Common myeloid progenitor, CD34-positive (primary cell): ENCODE measurements at regions of chr5 and their contacts with region 1.

Region 1: GRCh38 chr5:141914199-141914743 is 9.4 kb upstream of the DELE1 start:
- DNase-seq: peak; percentile 55 to 82 (median 74)
- H3K4me3 ChIP-seq: peak overlapping the region in 6 of 7 experiments; percentile 30 to 71 (median 58)
- H3K27ac ChIP-seq: no peak overlapping the region
- H3K4me1 ChIP-seq: peaks cover 5 to 14% (median 12%) of the 10 kb centered on the region in 4 experiments
- H3K27me3 ChIP-seq: peaks cover 0 to 8% (median 4%) of the 10 kb centered on the region in 5 experiments

Region 2: DNA sequence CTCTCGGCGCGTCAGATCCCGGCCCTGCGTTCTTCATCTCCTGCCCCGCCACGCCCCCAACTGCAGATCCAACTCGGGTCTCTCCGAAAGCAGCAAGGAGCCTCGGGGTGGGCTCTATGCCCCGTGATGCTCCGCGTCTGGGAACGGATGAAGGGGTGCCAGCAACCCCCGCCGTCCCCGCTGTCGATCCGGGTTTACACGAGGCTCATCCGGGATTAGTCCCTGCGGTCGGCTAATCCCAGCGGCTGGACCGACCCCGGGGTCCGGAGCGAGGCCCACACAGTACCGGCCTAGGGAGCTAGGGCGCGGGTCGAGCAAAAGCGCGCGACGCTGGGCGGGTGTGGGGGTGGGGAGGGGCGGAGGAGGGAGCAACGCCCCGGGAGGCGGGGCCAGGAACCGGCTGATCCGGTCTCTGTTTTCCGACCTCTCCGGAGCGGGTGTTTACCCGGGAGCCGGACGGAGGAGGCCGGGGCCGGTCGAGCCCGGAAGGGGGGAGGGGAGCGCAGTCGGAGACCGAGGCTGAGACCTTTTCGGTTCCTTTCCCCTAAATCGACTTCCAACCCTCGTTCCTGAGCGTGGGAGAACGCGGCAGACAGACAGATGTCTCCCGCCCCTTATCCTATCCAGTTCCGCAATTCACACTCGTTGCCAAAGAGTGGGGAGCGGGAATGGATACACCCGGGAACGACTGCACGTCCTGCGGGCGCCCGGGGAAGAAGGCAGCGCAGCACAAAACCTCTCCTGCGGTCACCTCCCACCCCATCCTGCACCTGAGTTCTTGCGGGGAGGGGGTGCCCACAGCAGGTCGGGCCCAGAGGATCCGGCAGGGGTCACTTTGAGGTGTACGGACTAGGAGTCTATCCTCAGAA is 64.7 kb before region 1 on chr5:
- CTCF ChIA-PET with region 1: no interaction called
- POLR2A ChIA-PET with region 1: no interaction called
- DNase-seq: peak; percentile 32 to 73 (median 65)
- H3K4me3 ChIP-seq: peak overlapping the region; percentile 56 to 91 (median 81)
- H3K27ac ChIP-seq: peak overlapping the region in 1 of 2 experiments; percentile 75
- H3K4me1 ChIP-seq: peaks cover 0 to 19% (median 15%) of the 10 kb centered on the region in 4 experiments
- H3K27me3 ChIP-seq: peaks cover 0 to 3% (median 0%) of the 10 kb centered on the region in 5 experiments

Region 3: DNA sequence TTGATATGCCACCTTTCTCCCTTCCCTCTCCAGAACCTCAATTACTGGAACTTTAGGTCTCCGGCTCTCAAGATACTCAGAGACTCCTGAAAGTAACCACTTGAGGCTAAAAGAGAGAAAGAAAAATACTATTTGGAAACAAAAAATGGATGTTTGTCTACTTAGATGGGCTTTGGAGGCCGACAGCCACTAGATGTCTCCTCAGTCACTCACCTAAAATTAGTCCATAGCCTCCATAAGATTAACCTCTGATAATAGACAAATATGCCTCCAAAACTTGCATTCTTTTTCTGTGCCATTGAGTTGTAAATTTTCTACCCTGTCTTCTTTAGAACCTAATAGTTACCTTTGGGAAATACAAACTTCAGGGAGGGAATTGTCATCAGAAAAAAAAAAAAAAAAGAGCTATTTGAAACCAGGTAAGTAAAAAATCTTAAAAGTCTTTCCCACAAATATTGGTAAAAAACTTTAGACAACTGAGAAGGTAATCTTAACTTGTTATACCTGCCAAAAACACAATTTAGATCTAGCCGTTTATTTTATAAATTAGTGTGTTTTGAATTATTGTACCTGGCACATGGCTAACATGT is 24.9 kb before region 1 on chr5:
- CTCF ChIA-PET with region 1: interaction called, 12 read pairs
- POLR2A ChIA-PET with region 1: no interaction called
- DNase-seq: peak in 2 of 3 donors; percentile 41 to 43
- H3K4me3 ChIP-seq: no peak overlapping the region
- H3K27ac ChIP-seq: no peak overlapping the region
- H3K4me1 ChIP-seq: no peaks in the 10 kb centered on the region
- H3K27me3 ChIP-seq: peaks cover 7 to 22% (median 11%) of the 10 kb centered on the region in 5 experiments

Region 4: DNA sequence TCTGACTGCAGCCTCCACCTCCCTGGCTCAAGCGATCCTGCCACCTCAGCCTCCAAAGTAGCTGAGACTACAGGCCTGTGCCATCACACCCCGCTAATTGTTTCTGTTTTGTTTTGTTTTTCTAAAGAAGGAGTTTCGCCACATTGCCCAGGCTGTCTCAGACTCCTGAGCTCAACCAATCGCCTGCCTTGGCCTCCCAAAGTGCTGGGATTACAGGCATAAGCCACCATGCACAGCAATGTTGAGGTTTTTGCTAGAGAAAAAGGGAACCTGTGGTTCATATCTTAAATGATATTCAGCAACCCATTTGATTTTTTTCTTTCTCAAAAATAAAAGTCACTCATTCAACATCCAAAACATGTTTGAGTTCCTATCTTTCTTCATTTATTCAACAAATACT is 11.0 kb before region 1 on chr5:
- CTCF ChIA-PET with region 1: interaction called, 14 read pairs
- POLR2A ChIA-PET with region 1: interaction called, 6 read pairs
- DNase-seq: peak in 2 of 3 donors; percentile 73 to 76
- H3K4me3 ChIP-seq: no peak overlapping the region
- H3K27ac ChIP-seq: no peak overlapping the region
- H3K4me1 ChIP-seq: peaks cover 0 to 17% (median 0%) of the 10 kb centered on the region in 4 experiments
- H3K27me3 ChIP-seq: peaks cover 0 to 3% (median 0%) of the 10 kb centered on the region in 5 experiments

Region 5: DNA sequence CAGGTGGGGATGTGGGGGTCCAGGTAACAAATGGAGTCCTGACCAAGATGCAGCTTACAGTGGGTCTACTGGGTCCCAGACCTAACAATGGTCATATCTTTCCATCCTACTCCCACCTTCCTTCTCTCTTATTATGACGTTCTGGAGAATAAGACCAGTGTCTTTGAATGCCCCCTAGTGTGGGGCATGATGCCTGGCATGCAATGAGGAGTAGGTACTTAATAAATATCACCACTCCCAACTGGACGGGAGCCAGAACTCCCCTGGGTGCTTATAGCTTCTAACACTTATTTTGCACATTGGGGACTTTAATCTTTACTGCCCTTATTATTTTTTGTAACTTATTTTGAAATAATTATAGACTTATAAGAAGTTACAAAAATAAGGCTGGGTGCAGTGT is 292.5 kb after region 1 on chr5:
- CTCF ChIA-PET with region 1: no interaction called
- POLR2A ChIA-PET with region 1: no interaction called
- DNase-seq: peak in 2 of 3 donors; percentile 14 to 20
- H3K4me3 ChIP-seq: no peak overlapping the region
- H3K27ac ChIP-seq: no peak overlapping the region
- H3K4me1 ChIP-seq: no peaks in the 10 kb centered on the region
- H3K27me3 ChIP-seq: peaks cover 0 to 5% (median 3%) of the 10 kb centered on the region in 5 experiments